Tibial artery (tissue), 4 donors: ENCODE measurements at regions of chr5 and their contacts with region 1.

Region 1: DNA sequence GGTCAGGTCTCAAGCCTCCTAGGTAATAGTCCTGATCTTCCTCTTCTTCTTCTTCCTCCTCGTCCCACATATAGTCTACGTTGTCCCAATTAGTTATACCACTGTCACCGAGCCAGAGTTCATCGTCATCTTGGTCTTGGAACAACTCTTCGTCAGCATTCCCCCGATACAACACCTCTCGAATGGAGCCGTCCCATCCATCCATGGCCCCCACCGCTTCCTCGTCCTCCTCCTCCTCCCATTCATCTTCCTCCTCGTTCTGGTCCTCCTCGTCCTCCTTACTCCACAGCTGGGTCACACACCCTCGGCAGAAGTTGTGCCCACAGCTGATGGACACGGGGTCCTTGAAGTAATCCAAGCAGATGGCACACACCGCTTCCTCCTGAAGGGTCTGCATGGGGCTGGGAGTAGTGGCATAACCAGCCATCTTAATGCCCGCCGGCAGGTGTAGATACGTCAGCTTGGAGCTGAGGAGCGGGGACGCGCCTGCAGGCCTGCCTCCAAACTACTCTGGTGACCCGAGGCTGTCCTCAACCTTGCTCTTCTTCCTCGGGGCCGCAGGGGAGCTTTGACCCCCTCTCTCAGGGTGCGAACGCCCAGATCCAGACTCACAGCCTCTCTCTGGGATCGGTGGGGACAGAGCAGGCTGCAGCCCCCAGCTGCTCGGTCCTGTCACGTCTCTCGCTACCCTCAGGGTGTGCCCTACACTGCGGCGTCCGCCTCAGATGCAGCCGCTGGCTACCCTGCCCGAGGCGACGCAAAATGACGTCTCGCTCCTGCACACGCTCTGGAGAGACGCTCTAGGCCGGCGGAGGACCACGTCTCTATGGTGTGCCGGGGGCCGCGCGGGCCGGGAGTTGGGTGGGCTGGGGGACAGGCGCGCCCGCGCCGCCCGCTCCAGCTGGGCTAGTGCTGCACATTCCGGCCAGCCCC is at the start of gene TRIM52:
- DNase-seq: peak; percentile 89 to 93
- H3K4me3 ChIP-seq: peak within 1 kb of the TSS; percentile 83 to 88
- H3K27ac ChIP-seq: peak within 1 kb of the TSS; percentile 97 to 98
- H3K4me1 ChIP-seq: peaks cover 0 to 53% (median 44%) of the 10 kb centered on the region in 4 donors
- H3K27me3 ChIP-seq: no peaks in the 10 kb centered on the region
- CTCF ChIP-seq: peak in 1 of 2 experiments; percentile 9

Region 2: DNA sequence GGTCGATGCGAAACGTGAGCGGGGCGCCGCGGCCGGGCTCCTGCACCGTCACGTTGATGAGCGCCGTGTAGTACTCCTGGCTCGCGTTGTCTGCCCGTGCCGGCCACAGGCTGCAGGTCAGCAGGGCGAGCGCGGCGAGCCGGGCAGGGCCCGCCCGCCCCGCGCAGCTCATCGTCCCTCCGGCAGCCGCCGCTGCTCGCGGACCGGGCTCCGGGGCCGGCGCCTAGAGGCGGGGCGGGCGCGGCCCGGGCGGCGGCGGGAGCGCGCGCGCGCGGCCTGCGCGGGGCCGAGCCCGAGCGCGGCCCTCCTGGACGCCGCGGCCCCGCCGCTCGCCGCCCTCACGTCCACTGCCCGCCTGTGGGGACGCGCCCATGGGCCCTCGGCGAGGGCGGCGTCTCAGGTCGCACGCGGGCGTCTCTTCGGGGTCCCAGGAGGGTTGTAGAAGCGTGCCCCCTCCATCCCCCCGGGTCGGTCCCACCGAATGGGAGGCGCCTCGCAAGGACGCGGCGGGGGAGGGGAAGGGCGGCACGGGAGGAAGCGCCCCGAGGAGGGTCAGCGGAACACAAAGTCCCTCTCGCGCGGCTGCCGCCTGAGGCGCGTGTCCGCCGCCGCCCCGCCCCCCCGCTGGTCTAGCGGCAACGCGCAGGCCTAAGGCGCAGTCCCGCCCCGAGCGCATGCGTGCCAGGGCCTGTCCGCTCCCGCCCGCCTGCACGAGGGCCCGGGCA is 1189.0 kb before region 1 on chr5 and contains the start of gene RNF130:
- intact Hi-C with region 1: loop called (anchors 10 kb)
- DNase-seq: peak; percentile 89 to 97
- H3K4me3 ChIP-seq: peak within 1 kb of the TSS; percentile 96 to 97
- H3K27ac ChIP-seq: peak within 1 kb of the TSS; percentile 93 to 99
- H3K4me1 ChIP-seq: peaks cover 0 to 22% (median 16%) of the 10 kb centered on the region in 4 donors
- H3K27me3 ChIP-seq: no peaks in the 10 kb centered on the region
- CTCF ChIP-seq: no peak

Region 3: GRCh38 chr5:180860887-180861822 is 399.5 kb before region 1 on chr5 and contains the start of gene ZFP62:
- intact Hi-C with region 1: loop called (anchors 10 kb)
- DNase-seq: peak; percentile 86 to 93
- H3K4me3 ChIP-seq: peak within 1 kb of the TSS; percentile 68 to 78
- H3K27ac ChIP-seq: peak within 1 kb of the TSS; percentile 71 to 82
- H3K4me1 ChIP-seq: peaks cover 0 to 11% (median 8%) of the 10 kb centered on the region in 4 donors
- H3K27me3 ChIP-seq: no peaks in the 10 kb centered on the region
- CTCF ChIP-seq: peak in 1 of 2 experiments; percentile 12

Region 4: GRCh38 chr5:181121659-181122561 is 138.7 kb before region 1 on chr5:
- intact Hi-C with region 1: no loop called
- DNase-seq: peak in 1 of 2 donors; percentile 62
- H3K4me3 ChIP-seq: no peak overlapping the region
- H3K27ac ChIP-seq: no peak overlapping the region
- H3K4me1 ChIP-seq: no peaks in the 10 kb centered on the region
- H3K27me3 ChIP-seq: peaks cover 0 to 45% of the 10 kb centered on the region in 2 donors
- CTCF ChIP-seq: no peak

Region 5: GRCh38 chr5:181187500-181188213 is 73.0 kb before region 1 on chr5:
- intact Hi-C with region 1: loop called (anchors 5 kb)
- DNase-seq: peak; percentile 78 to 89
- H3K4me3 ChIP-seq: peak overlapping the region; percentile 93 to 96
- H3K27ac ChIP-seq: peak overlapping the region; percentile 93 to 96
- H3K4me1 ChIP-seq: peaks cover 0 to 22% (median 21%) of the 10 kb centered on the region in 4 donors
- H3K27me3 ChIP-seq: no peaks in the 10 kb centered on the region
- CTCF ChIP-seq: peak in 1 of 2 experiments; percentile 18

Region 6: DNA sequence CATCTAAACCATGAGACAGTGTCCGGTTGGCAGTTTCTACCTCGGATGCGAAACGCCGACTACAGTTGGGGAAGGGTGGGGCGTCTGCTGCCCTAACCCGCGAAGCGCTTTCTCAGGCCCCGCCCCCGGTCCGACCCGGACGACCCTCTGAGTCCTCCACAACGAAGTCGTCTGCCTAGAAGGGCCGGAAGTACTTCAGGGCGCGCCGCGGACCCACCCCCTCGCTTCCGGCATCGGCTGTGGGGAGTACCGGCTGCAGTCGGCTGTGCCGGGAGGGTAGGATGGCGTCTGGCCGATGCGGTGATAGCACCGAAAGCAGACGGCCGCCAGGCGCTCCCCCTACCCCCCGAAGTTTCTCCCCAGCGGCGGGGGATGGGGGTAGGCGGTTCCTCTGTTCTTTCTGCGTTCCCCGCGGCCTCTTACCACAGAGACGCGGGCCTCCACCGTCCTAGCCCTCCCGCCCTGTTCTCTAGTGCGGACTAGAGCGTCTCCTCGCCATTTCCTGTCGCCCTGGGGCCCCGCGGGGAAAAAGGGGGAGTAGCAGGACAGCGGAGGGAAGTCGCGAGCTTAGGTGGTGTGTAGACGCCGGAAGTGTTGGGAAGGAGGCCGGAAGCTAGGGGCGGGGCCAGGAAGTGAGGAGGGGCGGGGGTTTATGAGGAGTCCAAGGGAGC is 37.5 kb before region 1 on chr5 and contains the start of gene TRIM41:
- intact Hi-C with region 1: no loop called
- DNase-seq: peak; percentile 99 to 100
- H3K4me3 ChIP-seq: peak within 1 kb of the TSS; percentile 68 to 95
- H3K27ac ChIP-seq: peak within 1 kb of the TSS; percentile 89 to 94
- H3K4me1 ChIP-seq: peaks cover 6 to 25% (median 14%) of the 10 kb centered on the region in 4 donors
- H3K27me3 ChIP-seq: no peaks in the 10 kb centered on the region
- CTCF ChIP-seq: no peak